HEK293 (cell line): ENCODE measurements at regions of chr7 and their contacts with region 1.

Region 1: DNA sequence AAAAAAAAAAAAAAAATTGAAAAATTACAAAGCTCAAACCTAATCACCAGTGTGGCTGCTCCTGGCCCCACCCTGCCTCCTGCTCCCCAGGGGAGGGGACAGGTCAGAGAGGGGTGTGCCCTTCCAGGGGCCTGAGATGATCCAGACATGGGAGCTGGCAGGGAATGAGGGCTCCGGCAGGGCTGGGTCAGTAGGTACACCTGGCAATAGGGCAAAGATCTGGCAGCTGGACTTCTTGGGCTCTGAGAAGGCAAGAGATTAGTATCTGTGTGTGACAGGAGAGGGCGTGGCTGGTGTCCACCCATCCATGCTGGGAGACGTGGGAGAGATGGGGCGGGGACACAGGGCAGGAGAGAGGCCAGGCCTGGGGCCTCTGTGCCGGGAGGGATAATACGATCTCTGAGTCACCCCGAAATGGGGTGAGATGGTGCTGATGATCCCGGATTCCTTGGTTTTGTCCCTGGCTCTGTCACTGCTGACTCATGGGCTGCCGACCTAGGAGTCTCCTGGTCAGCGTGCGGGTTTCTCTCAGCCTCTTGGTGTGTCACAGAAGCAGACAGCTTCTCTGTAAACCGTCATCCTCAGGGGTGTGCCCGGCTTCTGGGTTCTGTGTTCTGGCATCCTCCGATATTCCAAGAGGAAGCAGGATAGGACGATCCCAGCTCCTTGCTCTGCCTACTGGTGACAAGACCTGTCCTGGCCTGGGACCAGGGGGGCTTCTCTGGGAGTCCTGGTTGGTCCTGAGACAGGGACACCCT is 8.3 kb upstream of the CLDN4 start:
- H3K4me3 ChIP-seq: no peak overlapping the region
- H3K27ac ChIP-seq: no peak overlapping the region
- H3K4me1 ChIP-seq: peaks cover 5% of the 10 kb centered on the region
- CTCF ChIP-seq: no peak

Region 2: GRCh38 chr7:73366127-73366526 is 456.4 kb before region 1 on chr7:
- CTCF ChIA-PET with region 1: no interaction called
- POLR2A ChIA-PET with region 1: no interaction called
- H3K4me3 ChIP-seq: no peak overlapping the region
- H3K27ac ChIP-seq: no peak overlapping the region
- H3K4me1 ChIP-seq: no peaks in the 10 kb centered on the region
- CTCF ChIP-seq: no peak

Region 3: GRCh38 chr7:73436031-73436828 is 386.3 kb before region 1 on chr7:
- CTCF ChIA-PET with region 1: no interaction called
- POLR2A ChIA-PET with region 1: interaction called, 14 read pairs
- H3K4me3 ChIP-seq: no peak overlapping the region
- H3K27ac ChIP-seq: no peak overlapping the region
- H3K4me1 ChIP-seq: peaks cover 7% of the 10 kb centered on the region; the same call in 1 of the 2 replicates
- CTCF ChIP-seq: no peak

Region 4: DNA sequence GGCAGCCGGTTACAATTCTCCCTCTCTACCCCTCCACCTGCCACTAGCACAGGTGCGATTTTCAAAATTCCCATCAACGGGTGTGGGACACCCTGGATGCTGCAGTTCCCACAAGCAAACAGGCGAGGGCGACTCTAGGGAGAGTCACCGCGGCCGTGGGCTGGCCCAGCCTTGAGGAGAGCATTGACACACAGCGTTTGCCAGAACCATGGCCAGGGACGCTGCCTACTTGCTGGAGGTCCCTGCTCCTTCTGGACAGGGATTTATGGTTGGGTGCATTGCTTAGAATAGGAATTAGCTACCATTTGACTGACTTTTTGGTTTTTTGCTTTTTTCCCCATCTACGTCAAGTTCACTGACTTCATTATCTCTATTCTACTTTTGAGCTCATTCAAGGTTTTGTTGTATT is 10.7 kb before region 1 on chr7:
- CTCF ChIA-PET with region 1: interaction called, 11 read pairs
- POLR2A ChIA-PET with region 1: interaction called, 3 read pairs
- H3K4me3 ChIP-seq: no peak overlapping the region
- H3K27ac ChIP-seq: no peak overlapping the region
- H3K4me1 ChIP-seq: no peaks in the 10 kb centered on the region
- CTCF ChIP-seq: no peak

Region 5: GRCh38 chr7:73842247-73842895 is 19.9 kb after region 1 on chr7 and contains the start of gene METTL27:
- CTCF ChIA-PET with region 1: interaction called, 3 read pairs
- POLR2A ChIA-PET with region 1: interaction called, 12 read pairs
- H3K4me3 ChIP-seq: peak within 1 kb of the TSS; percentile 57
- H3K27ac ChIP-seq: peak within 1 kb of the TSS; percentile 46; the same call in 1 of the 2 replicates
- H3K4me1 ChIP-seq: peaks cover 6% of the 10 kb centered on the region; the same call in 1 of the 2 replicates
- CTCF ChIP-seq: no peak